ENCODE measurements at regions of chr3 and their contacts with region 1.

Region 1: GRCh38 chr3:32882603-32883025 is 64.8 kb downstream of the TRIM71 start:
- DNase-seq: peak; percentile 19
- H3K4me3 Mint-ChIP-seq: no peak overlapping the region
- H3K27ac Mint-ChIP-seq: no peak overlapping the region
- H3K4me1 Mint-ChIP-seq: peaks cover 23% of the 10 kb centered on the region
- H3K27me3 Mint-ChIP-seq: peaks cover 41% of the 10 kb centered on the region

Region 2: GRCh38 chr3:32901432-32902409 is 19.1 kb after region 1 on chr3:
- CTCF ChIA-PET with region 1: interaction called, 11 read pairs
- POLR2A ChIA-PET with region 1: interaction called, 5 read pairs
- DNase-seq: peak; percentile 47
- H3K4me3 Mint-ChIP-seq: peak overlapping the region; percentile 13
- H3K27ac Mint-ChIP-seq: no peak overlapping the region
- H3K4me1 Mint-ChIP-seq: peaks cover 4% of the 10 kb centered on the region
- H3K27me3 Mint-ChIP-seq: peaks cover 25% of the 10 kb centered on the region